ENCODE measurements at regions of chr12 and their contacts with region 1.

Region 1: DNA sequence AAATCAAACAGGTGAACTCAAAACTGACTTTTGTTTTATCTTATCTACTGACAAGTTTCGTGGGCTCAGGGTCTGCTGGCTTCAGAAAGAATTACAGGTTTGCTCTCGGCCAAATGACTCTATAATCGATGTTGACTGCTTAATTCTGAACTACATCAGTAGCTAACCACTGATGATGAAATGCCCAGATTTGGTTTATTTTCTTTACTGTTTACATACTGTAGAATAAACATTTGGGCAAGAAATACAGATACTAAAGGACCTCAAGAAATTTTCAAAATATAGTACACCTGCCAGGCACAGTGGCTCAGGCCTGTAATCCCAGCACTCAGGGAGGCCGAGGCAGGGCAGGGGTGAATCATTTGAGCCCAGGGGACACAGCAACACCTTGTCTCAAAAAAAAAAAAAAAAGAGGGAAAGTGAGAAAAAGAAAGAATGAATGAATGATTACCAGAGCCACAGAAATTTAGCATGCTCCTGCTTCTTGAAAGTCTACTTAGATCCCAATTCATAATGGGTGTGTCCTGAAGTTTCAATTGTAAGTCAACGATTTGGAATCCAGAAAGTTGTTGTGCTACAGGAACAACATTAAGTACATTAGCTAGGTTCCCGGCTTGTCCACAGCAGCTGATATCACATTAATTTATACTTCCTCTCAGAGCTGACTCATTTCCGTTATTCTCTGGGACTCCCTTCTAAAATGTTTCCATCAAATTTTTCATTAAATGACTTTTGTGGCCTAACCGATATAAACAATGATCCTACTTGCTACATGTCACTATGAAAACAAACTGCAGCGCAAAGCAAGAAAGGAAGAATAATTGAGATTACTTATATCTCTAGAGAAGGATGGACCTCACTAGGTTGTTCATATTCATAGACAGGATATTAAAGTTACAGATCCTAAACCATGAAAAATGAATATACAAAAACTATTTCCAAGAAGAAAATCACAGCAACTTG is 134.3 kb downstream of the MED13L start:
- DNase-seq: peak; percentile 89
- ATAC-seq: peak; percentile 68
- H3K4me3 ChIP-seq: no peak overlapping the region
- H3K27ac ChIP-seq: no peak overlapping the region
- H3K4me1 ChIP-seq: peaks cover 15% of the 10 kb centered on the region
- H3K27me3 ChIP-seq: no peaks in the 10 kb centered on the region
- CTCF ChIP-seq: no peak
- POLR2A ChIP-seq: no peak
- RAD21 ChIP-seq: no peak

Region 2: DNA sequence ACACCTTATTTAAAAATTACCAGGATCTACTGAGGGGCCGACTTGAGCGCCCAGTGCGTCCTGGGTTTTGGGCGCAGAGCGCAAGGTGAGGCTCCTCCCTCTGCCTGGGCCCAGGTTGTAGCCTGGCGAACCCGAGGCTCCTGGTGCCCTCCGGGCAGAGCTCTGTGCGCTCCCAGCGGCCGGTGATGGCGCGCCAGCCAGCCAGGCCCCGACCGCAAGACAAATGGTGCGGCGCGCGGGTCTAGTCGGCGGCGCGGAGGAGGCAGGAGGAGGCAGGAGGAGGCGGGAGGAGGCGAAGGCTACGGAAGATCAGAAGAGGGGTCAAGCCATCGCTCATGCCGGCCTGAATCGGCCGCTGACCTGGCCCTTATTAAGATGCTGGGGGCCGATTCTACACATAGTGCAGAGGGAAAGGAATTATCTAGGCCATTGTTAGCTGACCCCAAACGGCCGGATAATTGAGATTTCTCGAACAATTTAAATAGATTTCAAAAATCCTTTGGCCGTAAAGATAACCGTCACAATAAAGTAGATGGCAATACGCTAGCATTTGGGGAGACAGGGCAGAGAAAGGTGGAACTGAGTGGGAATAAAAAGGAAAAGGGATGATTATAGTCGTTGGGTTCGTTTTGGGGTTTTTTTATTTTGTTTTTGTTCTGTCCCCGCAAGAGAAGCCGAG is 1740.1 kb before region 1 on chr12:
- CTCF ChIA-PET with region 1: no interaction called
- POLR2A ChIA-PET with region 1: no interaction called
- dilution Hi-C with region 1: no loop called
- in situ Hi-C with region 1: no loop called
- intact Hi-C with region 1: no loop called
- DNase-seq: peak; percentile 69
- ATAC-seq: peak; percentile 7
- H3K4me3 ChIP-seq: peak overlapping the region; percentile 97
- H3K27ac ChIP-seq: peak overlapping the region; percentile 100
- H3K4me1 ChIP-seq: peaks cover 21% of the 10 kb centered on the region
- H3K27me3 ChIP-seq: no peaks in the 10 kb centered on the region
- CTCF ChIP-seq: peak; percentile 38
- POLR2A ChIP-seq: no peak
- RAD21 ChIP-seq: peak; percentile 21

Region 3: DNA sequence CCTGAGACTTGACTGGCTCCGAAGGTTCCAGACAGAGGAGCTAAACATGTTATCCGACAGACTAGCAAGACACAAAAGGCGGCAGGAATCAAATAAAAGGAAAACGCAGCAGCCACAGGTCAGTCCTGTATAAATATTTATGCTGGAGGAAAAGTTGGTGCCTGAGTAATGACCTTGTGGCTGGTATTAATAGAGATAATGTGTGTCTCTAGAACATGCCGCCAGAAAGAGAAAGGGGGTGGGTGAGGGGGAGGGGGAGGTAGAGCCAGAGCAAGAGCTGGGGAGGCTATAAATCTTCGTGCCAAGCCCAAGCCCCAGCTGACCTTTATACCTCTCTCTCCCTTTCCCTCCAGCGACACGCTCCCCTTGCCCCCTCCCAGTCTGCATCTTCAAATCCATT is 456.1 kb before region 1 on chr12:
- CTCF ChIA-PET with region 1: no interaction called
- POLR2A ChIA-PET with region 1: no interaction called
- dilution Hi-C with region 1: no loop called
- in situ Hi-C with region 1: no loop called
- intact Hi-C with region 1: no loop called
- DNase-seq: no peak
- ATAC-seq: no peak
- H3K4me3 ChIP-seq: no peak overlapping the region
- H3K27ac ChIP-seq: no peak overlapping the region
- H3K4me1 ChIP-seq: no peaks in the 10 kb centered on the region
- H3K27me3 ChIP-seq: peaks cover 17% of the 10 kb centered on the region
- CTCF ChIP-seq: no peak
- POLR2A ChIP-seq: no peak
- RAD21 ChIP-seq: no peak

Region 4: GRCh38 chr12:116236148-116236731 is 93.0 kb after region 1 on chr12:
- CTCF ChIA-PET with region 1: interaction called, 5 read pairs
- POLR2A ChIA-PET with region 1: no interaction called
- dilution Hi-C with region 1: no loop called
- in situ Hi-C with region 1: no loop called
- intact Hi-C with region 1: loop called (anchors 5 kb)
- DNase-seq: peak; percentile 54
- ATAC-seq: peak; percentile 40; the same call in 1 of the 2 replicates
- H3K4me3 ChIP-seq: no peak overlapping the region
- H3K27ac ChIP-seq: no peak overlapping the region
- H3K4me1 ChIP-seq: peaks cover 2% of the 10 kb centered on the region
- H3K27me3 ChIP-seq: no peaks in the 10 kb centered on the region
- CTCF ChIP-seq: peak; percentile 64
- POLR2A ChIP-seq: no peak
- RAD21 ChIP-seq: peak; percentile 68

Region 5: DNA sequence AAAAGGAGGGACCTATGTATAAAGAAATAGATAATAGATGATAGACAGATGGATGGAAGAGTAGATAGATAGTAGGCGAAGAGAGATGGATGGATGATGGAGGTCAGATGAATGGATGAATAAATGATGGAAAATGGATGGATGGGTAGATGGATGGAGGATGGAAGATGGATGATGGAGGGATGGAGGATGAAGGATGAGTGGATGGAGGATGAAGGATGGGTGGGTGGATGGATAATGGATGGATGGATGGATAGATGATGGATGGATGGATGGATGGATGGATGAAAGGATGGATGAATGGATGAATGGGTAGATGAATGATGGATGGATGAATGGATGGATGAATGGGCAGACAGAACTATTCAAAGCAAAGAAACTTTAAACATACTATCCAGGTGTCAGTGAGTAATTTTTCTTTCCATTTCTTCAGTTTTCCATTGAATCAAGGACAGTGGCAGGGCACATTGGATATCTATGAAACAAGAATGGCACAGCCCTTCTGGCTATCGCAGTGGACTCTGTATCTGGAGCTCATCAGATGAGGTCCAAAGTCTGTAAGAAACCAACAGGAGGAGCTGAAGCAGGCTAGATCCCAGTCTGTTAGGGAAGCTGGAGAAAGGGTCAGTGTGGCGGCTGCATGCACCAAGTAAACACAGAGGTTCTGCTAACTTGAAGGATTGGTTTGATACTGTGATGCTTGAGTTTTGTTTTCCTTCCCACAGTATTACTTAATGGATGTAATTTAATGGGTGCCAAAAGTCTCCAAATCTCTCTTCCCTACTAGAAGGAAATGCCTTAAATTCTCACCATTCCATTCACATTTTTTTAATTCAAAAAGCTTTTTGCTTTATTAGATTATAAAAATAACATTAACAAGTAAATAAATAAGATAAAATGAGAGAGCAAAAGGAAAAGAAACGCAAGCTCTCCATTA is 152.4 kb after region 1 on chr12:
- CTCF ChIA-PET with region 1: no interaction called
- POLR2A ChIA-PET with region 1: no interaction called
- dilution Hi-C with region 1: no loop called
- in situ Hi-C with region 1: no loop called
- intact Hi-C with region 1: no loop called
- DNase-seq: peak; percentile 22
- ATAC-seq: peak; percentile 35; the same call in 1 of the 2 replicates
- H3K4me3 ChIP-seq: no peak overlapping the region
- H3K27ac ChIP-seq: no peak overlapping the region
- H3K4me1 ChIP-seq: peaks cover 6% of the 10 kb centered on the region; the same call in 1 of the 2 replicates
- H3K27me3 ChIP-seq: no peaks in the 10 kb centered on the region
- CTCF ChIP-seq: no peak
- POLR2A ChIP-seq: no peak
- RAD21 ChIP-seq: no peak

Region 6: GRCh38 chr12:116426391-116427136 is 283.3 kb after region 1 on chr12:
- CTCF ChIA-PET with region 1: no interaction called
- POLR2A ChIA-PET with region 1: no interaction called
- dilution Hi-C with region 1: no loop called
- in situ Hi-C with region 1: no loop called
- intact Hi-C with region 1: loop called (anchors 10 kb)
- DNase-seq: peak; percentile 98
- ATAC-seq: peak; percentile 95
- H3K4me3 ChIP-seq: no peak overlapping the region
- H3K27ac ChIP-seq: peak overlapping the region; percentile 64
- H3K4me1 ChIP-seq: peaks cover 12% of the 10 kb centered on the region
- H3K27me3 ChIP-seq: no peaks in the 10 kb centered on the region
- CTCF ChIP-seq: peak; percentile 63
- POLR2A ChIP-seq: 0 out of 2 replicates have a peak, but pooled peaks have one; percentile 33
- RAD21 ChIP-seq: peak; percentile 76

Region 7: GRCh38 chr12:116547955-116548501 is 404.8 kb after region 1 on chr12:
- CTCF ChIA-PET with region 1: no interaction called
- POLR2A ChIA-PET with region 1: no interaction called
- dilution Hi-C with region 1: no loop called
- in situ Hi-C with region 1: no loop called
- intact Hi-C with region 1: no loop called
- DNase-seq: peak; percentile 55
- ATAC-seq: peak; percentile 86
- H3K4me3 ChIP-seq: no peak overlapping the region
- H3K27ac ChIP-seq: no peak overlapping the region
- H3K4me1 ChIP-seq: peaks cover 8% of the 10 kb centered on the region
- H3K27me3 ChIP-seq: no peaks in the 10 kb centered on the region
- CTCF ChIP-seq: no peak
- POLR2A ChIP-seq: no peak
- RAD21 ChIP-seq: no peak

Region 8: DNA sequence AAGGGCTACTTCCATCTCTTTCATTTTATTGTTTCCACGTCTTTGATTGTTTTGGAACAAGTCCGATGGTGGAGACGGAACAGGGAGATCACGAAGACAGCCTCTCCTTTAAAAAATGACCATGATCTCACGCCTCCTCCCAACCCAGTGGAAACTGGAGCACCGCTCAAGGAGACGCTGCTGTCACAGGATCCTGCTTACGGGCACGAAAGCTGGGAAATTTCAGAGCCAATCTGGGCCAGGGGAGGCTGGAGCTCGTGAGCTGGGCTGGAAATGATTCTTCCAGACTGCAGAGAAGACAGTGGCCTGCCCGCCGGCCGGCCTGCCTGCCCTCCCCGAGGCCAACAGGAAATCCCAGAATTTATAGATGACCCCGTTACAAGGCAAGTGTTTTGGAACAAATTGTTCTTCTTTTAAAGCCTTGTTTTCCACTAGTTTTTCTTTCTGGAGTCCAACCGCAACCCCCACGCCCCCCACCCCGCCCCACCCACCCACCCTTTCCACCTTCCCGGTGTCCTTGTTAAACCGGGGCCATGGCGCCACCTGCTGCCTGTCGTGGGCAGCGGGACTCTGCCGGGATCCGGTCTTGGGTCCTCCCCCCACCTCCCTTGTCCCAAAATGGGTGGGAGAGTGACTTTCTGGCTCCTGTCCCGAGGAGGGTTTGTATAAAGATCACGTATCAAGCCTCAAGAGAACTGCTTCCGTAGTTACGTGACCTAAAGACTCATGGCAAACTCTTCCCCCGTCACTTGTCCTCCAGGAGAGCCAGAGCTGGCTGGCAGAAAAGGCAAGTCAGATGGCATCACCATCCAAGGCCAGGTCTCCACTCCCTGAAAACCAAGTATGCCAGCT is 456.3 kb after region 1 on chr12:
- CTCF ChIA-PET with region 1: no interaction called
- POLR2A ChIA-PET with region 1: no interaction called
- dilution Hi-C with region 1: no loop called
- in situ Hi-C with region 1: no loop called
- intact Hi-C with region 1: loop called (anchors 5 kb)
- DNase-seq: peak; percentile 58
- ATAC-seq: peak; percentile 93
- H3K4me3 ChIP-seq: no peak overlapping the region
- H3K27ac ChIP-seq: peak overlapping the region; percentile 61
- H3K4me1 ChIP-seq: peaks cover 11% of the 10 kb centered on the region
- H3K27me3 ChIP-seq: no peaks in the 10 kb centered on the region; the same call in 1 of the 2 replicates
- CTCF ChIP-seq: peak; percentile 61
- POLR2A ChIP-seq: no peak
- RAD21 ChIP-seq: peak; percentile 64

Measured in IMR-90 (cell line).